ENCODE measurements at regions of chrX and their contacts with region 1.

Region 1: GRCh38 chrX:153460845-153461244 is 9.5 kb downstream of the HAUS7 start:
- DNase-seq: no peak
- ATAC-seq: peak; percentile 62
- H3K4me3 Mint-ChIP-seq: no peak overlapping the region
- H3K27ac Mint-ChIP-seq: no peak overlapping the region
- H3K4me1 Mint-ChIP-seq: no peaks in the 10 kb centered on the region
- H3K27me3 Mint-ChIP-seq: no peaks in the 10 kb centered on the region
- CTCF ChIP-seq: no peak

Region 2: DNA sequence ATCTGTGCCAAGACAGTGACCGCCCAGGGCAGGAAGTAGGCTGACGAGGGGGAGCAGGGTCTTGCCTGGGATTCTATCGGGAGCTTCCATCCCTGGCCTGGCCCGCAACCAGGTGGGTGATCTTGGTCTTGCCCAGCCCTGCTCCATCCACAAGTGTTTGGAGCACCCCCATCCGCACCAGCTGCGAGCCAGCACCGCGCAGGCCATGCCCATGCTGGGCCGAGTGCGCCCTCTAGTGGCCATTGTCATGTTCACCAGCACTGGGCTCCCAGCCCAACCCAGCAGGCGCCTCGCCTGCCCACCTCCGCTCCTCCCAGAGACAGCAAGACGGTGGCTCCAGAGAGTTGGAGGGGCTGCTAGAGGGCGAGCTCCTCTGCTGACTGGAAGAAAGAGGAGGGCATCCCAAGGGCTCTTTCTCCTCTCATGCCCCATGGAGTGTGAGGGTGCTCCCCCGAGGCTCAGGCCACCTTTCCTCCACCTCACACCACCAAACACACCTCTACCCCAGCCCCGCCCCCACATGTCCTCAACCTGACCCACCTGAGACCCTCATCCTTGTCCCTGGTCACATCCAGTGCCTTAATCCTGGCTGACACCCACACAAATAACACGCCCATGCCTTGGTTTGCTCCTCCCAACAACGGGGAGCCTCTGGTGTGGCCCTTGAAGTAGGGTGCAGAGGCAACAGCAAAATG is 46.8 kb after region 1 on chrX:
- CTCF ChIA-PET with region 1: interaction called, 5 read pairs
- POLR2A ChIA-PET with region 1: no interaction called
- intact Hi-C with region 1: loop called (anchors 1 kb)
- DNase-seq: peak; percentile 68
- ATAC-seq: peak; percentile 99
- H3K4me3 Mint-ChIP-seq: no peak overlapping the region
- H3K27ac Mint-ChIP-seq: no peak overlapping the region
- H3K4me1 Mint-ChIP-seq: no peaks in the 10 kb centered on the region
- H3K27me3 Mint-ChIP-seq: no peaks in the 10 kb centered on the region
- CTCF ChIP-seq: no peak